Endothelial cell of umbilical vein (primary cell): ENCODE measurements at regions of chr6 and their contacts with region 1.

Region 1: DNA sequence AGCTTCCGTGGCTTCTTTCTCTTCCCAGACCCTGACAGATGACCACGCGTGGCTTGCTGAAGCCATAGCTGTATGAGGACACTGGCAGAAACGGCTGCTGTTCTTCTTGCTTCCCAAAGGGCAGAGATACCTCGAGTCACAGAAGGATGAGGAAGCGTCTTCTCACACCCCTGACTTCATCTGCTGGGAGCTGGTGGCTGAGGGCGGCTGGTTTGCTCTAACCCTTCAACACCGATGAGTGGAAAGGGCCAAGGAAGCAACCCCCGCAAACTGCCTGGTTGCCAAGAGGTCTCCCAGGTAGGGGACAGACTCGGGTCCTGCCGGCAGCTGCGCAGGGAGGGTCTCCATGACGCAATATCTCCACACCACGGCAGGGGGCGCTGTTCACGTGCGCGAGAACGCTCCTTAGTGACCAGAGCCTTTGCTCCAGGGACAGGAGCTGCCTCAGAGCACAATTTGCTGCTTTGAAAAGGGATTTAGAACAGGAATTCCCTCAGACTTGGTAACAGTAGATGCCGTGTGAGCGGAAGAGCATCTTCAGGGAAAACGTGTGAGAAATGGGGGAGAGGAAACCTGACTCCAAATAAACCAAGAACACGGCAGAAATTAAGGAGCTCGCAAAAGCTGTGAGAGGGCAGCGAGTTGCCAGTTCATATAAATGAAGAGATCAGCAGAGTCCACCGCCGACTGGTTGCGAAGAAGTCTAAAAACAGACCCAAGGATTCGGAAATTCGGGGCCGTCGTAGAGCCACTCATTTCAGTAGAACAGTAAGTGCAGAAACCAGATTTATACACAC is 80.2 kb downstream of the ERMARD start:
- DNase-seq: peak; percentile 77
- H3K4me3 ChIP-seq: no peak overlapping the region
- H3K27ac ChIP-seq: no peak overlapping the region
- H3K4me1 ChIP-seq: peaks cover 14% of the 10 kb centered on the region
- H3K27me3 ChIP-seq: peaks cover 0 to 1% of the 10 kb centered on the region in 2 experiments
- CTCF ChIP-seq: peak; percentile 85 to 93
- POLR2A ChIP-seq: no peak

Region 2: DNA sequence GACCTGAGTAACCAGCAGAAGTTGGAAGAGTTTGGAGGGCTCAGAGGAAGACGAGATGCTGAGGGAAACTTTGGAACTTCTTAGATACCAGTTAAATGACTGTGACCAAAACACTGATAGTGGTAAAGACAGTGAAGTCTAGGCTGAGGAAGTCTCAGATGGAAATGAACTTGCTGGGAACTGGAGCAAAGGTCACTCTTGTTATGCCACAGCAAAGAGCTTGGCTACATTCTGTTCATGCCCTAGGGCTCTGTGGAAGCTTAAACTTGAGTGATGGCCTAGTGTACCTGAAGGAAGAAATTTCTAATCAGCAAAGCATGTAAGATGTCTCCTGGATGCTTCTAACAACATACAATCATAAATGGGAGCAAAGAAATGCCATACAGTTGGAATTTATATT is 154.6 kb before region 1 on chr6:
- CTCF ChIA-PET with region 1: no interaction called
- POLR2A ChIA-PET with region 1: no interaction called
- dilution Hi-C with region 1: no loop called
- intact Hi-C with region 1: no loop called
- DNase-seq: no peak
- H3K4me3 ChIP-seq: no peak overlapping the region
- H3K27ac ChIP-seq: no peak overlapping the region
- H3K4me1 ChIP-seq: no peaks in the 10 kb centered on the region
- H3K27me3 ChIP-seq: no peaks in the 10 kb centered on the region
- CTCF ChIP-seq: no peak
- POLR2A ChIP-seq: no peak

Region 3: DNA sequence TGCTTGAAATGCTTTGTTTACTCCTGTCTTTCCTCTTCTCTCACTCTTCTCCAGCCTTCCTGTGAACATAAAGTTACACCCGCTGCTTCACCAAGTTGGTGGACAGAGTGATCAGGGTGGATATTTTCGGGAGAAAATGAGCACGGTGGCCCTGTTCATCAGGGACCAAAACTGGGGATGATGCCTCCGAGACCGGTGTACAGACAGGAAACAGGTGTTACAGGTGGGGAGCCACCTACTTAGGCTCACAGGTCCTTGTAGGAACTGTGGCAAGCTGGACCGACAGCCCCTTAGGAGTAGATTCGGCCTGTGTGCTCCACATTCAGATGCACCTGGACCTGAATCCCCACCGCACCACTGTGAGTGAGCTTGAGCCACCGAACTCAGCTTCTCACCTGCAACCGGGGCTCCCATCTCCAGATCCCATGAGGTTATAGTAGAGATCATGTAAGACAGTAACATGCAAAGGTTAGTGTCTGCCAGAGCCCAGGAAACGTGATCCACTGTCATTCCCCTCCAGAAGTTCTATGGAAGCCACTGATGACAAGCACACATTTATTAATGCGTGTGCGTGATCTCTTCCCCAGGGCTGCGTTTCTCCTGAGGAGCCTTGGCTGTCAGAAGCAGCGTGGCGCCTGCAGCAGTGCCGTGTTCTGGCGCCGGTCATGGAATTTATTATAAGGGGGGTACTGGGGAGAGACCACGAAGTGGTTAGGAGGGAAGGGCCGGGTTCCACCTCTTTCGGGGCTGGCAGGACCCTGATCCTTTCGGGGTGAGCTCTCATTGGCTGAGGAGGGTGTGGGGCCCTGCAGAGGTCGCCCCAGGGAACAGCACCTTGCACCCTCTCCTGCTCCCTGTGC is 14.0 kb after region 1 on chr6:
- CTCF ChIA-PET with region 1: interaction called, 42 read pairs
- POLR2A ChIA-PET with region 1: no interaction called
- dilution Hi-C with region 1: no loop called
- intact Hi-C with region 1: no loop called
- DNase-seq: no peak
- H3K4me3 ChIP-seq: no peak overlapping the region
- H3K27ac ChIP-seq: no peak overlapping the region
- H3K4me1 ChIP-seq: no peaks in the 10 kb centered on the region
- H3K27me3 ChIP-seq: peaks cover 4 to 5% of the 10 kb centered on the region in 2 experiments
- CTCF ChIP-seq: no peak
- POLR2A ChIP-seq: no peak

Region 4: DNA sequence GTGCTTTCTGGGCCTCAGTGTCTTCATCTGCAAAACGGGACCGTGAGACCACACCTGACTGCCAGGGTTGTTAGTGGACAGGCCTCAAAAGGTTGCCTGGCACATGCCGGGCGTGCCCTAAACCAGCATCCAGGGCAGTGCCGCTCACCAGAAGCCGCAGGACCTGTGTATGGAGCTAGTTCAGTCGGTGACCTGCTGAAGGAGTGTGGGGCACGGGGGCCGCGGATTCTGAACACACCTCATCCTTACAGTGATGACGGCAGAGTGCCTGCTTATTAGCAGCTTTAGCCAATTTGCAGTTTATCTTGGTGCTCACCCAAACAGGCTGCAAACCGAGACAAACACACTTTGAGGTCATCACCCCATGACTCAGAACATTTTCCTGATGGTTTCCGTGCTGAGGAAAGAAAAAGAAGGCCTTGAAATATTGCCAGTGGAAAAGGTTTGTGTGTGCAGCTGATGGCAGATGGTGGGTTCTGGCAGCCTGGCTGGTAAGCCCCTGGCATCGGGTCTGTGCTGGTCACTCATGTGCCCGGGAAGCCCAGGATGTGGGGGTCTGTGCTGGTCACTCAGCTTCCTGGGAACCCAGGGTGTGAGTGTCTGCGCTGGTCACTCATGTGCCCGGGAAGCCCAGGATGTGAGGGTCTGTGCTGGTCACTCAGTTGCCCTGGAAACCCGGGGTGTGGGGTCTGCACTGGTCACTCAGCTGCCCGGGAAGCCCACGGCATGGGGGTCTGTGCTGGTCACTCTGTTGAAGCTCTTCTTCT is 73.6 kb after region 1 on chr6:
- CTCF ChIA-PET with region 1: interaction called, 42 read pairs
- POLR2A ChIA-PET with region 1: no interaction called
- dilution Hi-C with region 1: no loop called
- intact Hi-C with region 1: no loop called
- DNase-seq: peak; percentile 99
- H3K4me3 ChIP-seq: no peak overlapping the region
- H3K27ac ChIP-seq: peak overlapping the region; percentile 75
- H3K4me1 ChIP-seq: peaks cover 28% of the 10 kb centered on the region
- H3K27me3 ChIP-seq: no peaks in the 10 kb centered on the region
- CTCF ChIP-seq: no peak
- POLR2A ChIP-seq: peak; percentile 74

Region 5: GRCh38 chr6:169990095-169991030 is 158.7 kb after region 1 on chr6:
- CTCF ChIA-PET with region 1: interaction called, 19 read pairs
- POLR2A ChIA-PET with region 1: no interaction called
- dilution Hi-C with region 1: no loop called
- intact Hi-C with region 1: no loop called
- DNase-seq: peak; percentile 26
- H3K4me3 ChIP-seq: no peak overlapping the region
- H3K27ac ChIP-seq: no peak overlapping the region
- H3K4me1 ChIP-seq: no peaks in the 10 kb centered on the region
- H3K27me3 ChIP-seq: no peaks in the 10 kb centered on the region
- CTCF ChIP-seq: no peak
- POLR2A ChIP-seq: no peak

Region 6: GRCh38 chr6:170049641-170050561 is 218.3 kb after region 1 on chr6:
- CTCF ChIA-PET with region 1: no interaction called
- POLR2A ChIA-PET with region 1: no interaction called
- dilution Hi-C with region 1: no loop called
- intact Hi-C with region 1: no loop called
- DNase-seq: no peak
- H3K4me3 ChIP-seq: no peak overlapping the region
- H3K27ac ChIP-seq: no peak overlapping the region
- H3K4me1 ChIP-seq: no peaks in the 10 kb centered on the region
- H3K27me3 ChIP-seq: no peaks in the 10 kb centered on the region
- CTCF ChIP-seq: no peak
- POLR2A ChIP-seq: no peak

Region 7: GRCh38 chr6:170152989-170153388 is 321.3 kb after region 1 on chr6:
- CTCF ChIA-PET with region 1: interaction called, 7 read pairs
- POLR2A ChIA-PET with region 1: no interaction called
- dilution Hi-C with region 1: no loop called
- intact Hi-C with region 1: loop called (anchors 5 kb)
- DNase-seq: no peak
- H3K4me3 ChIP-seq: no peak overlapping the region
- H3K27ac ChIP-seq: no peak overlapping the region
- H3K4me1 ChIP-seq: peaks cover 7% of the 10 kb centered on the region
- H3K27me3 ChIP-seq: no peaks in the 10 kb centered on the region
- CTCF ChIP-seq: no peak
- POLR2A ChIP-seq: no peak

Region 8: DNA sequence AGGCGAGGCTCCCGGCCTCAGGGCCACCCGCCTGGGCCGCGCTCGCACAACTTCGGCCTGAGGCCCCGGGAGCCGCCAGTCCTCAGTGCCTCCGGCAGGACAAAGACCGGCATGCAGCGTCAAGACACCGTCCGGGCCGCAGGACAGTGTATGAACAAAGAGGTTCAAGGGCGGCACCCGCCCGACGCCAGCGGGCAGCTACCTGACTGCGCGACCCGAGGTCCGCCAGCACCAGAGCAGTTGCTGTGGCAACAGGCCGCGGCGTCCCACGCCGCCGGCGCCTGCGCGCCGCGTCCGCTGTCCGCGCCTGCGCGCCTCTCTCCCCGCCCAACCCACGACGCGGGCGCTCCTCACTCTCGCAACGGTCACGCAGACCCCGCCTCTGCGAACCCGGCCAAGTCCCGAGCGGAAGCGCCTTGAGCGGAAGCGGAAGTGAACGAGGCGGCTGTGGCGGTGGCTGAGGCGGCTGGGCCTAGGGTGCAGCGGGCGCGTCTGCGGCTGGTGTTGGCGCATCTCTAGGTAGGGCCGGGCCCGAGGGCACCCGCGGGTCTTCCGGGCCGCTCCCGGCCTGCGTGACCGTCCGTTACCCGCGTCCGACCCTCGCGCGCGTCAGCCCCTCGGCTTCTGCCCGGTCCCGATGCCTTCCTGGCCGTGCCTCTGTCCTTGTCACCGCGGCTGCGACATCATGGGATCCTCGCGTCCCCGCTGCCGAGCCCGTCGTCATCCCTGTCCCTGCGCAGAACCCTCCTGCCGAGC is 474.9 kb after region 1 on chr6 and contains the start of gene FAM120B:
- CTCF ChIA-PET with region 1: interaction called, 12 read pairs
- POLR2A ChIA-PET with region 1: no interaction called
- dilution Hi-C with region 1: no loop called
- intact Hi-C with region 1: loop called (anchors 5 kb)
- DNase-seq: peak; percentile 96
- H3K4me3 ChIP-seq: peak within 1 kb of the TSS; percentile 48 to 86 (median 78)
- H3K27ac ChIP-seq: peak within 1 kb of the TSS; percentile 73
- H3K4me1 ChIP-seq: peaks cover 11% of the 10 kb centered on the region
- H3K27me3 ChIP-seq: no peaks in the 10 kb centered on the region
- CTCF ChIP-seq: no peak
- POLR2A ChIP-seq: peak; percentile 97
- total RNA-seq, gene FAM120B: 28.1 and 28.2 TPM in 2 replicates

Region 9: GRCh38 chr6:170529839-170530469 is 698.3 kb after region 1 on chr6:
- CTCF ChIA-PET with region 1: interaction called, 49 read pairs
- POLR2A ChIA-PET with region 1: no interaction called
- dilution Hi-C with region 1: no loop called
- intact Hi-C with region 1: loop called (anchors 1 kb)
- DNase-seq: peak; percentile 67
- H3K4me3 ChIP-seq: no peak overlapping the region
- H3K27ac ChIP-seq: no peak overlapping the region
- H3K4me1 ChIP-seq: no peaks in the 10 kb centered on the region
- H3K27me3 ChIP-seq: no peaks in the 10 kb centered on the region
- CTCF ChIP-seq: peak; percentile 87 to 90
- POLR2A ChIP-seq: no peak